ENCODE measurements at regions of chr10 and their contacts with region 1.

Region 1: DNA sequence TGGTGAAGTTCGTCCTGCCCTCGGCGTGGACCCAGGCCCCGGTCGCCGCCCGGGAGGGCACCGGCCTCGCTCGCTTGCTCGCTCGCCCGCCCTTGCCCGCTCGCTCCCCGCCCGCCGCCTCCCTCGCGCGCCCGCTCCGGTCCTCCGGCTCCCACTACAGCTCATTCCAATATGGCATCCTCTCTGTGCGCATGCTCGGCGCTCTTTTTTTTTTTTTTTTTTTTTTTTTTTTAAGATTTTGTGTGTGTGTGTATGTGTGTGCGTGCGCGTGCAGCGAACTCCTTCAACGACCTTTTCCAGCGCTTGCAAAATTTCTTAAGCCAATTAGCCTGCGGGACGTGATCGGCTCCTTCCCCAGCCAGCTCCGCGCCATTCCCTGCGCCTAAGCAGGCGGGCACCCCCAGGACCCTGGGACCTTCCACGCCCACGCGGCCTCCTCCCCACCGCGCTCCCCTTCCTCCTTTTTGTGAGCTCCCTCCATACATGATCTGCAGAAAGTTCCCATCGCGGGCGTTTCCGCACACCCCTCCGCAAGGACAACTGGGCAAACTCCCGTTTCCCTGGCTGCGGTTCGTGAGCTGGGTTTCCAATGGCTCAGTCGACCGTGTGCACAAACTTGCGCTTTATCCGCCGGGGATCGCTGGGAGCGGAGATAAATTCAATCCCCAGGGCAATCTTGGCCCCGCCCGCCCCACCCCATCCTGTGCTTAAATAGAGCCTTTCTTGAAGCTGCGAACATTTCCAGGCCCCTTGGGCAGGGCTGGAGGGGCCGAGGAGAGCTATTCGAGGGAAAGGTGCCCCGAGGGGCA is at the start of gene SFMBT2:
- DNase-seq: peak; percentile 92
- H3K4me3 ChIP-seq: peak within 1 kb of the TSS; percentile 57 to 72
- H3K27ac ChIP-seq: peak within 1 kb of the TSS in 1 of 2 experiments; percentile 70; a peak in 2 of 4 replicates
- H3K4me1 ChIP-seq: peaks cover 0 to 15% of the 10 kb centered on the region in 2 experiments; a peak in 1 of 4 replicates
- H3K27me3 ChIP-seq: peaks cover 38% of the 10 kb centered on the region
- CTCF ChIP-seq: no peak
- EP300 ChIP-seq: no peak
- RAD21 ChIP-seq: no peak
- polyA plus RNA-seq, gene SFMBT2: 0.20 and 0.49 TPM in 2 replicates

Region 2: GRCh38 chr10:6920072-6921019 is 490.7 kb before region 1 on chr10:
- CTCF ChIA-PET with region 1: interaction called, 19 read pairs
- POLR2A ChIA-PET with region 1: interaction called, 3 read pairs
- DNase-seq: peak; percentile 71
- H3K4me3 ChIP-seq: peak overlapping the region in 1 of 2 experiments; percentile 42; a peak in 2 of 4 replicates
- H3K27ac ChIP-seq: no peak overlapping the region
- H3K4me1 ChIP-seq: peaks cover 2 to 3% of the 10 kb centered on the region in 2 experiments; a peak in 1 of 4 replicates
- H3K27me3 ChIP-seq: no peaks in the 10 kb centered on the region
- CTCF ChIP-seq: peak; percentile 69
- EP300 ChIP-seq: no peak
- RAD21 ChIP-seq: peak; percentile 82

Region 3: GRCh38 chr10:7255517-7255916 is 155.5 kb before region 1 on chr10:
- CTCF ChIA-PET with region 1: interaction called, 16 read pairs
- POLR2A ChIA-PET with region 1: no interaction called
- DNase-seq: no peak
- H3K4me3 ChIP-seq: no peak overlapping the region
- H3K27ac ChIP-seq: peak overlapping the region in 1 of 2 experiments; percentile 3; a peak in 2 of 4 replicates
- H3K4me1 ChIP-seq: peaks cover 0 to 31% of the 10 kb centered on the region in 2 experiments; a peak in 2 of 4 replicates
- H3K27me3 ChIP-seq: no peaks in the 10 kb centered on the region
- CTCF ChIP-seq: no peak
- EP300 ChIP-seq: no peak
- RAD21 ChIP-seq: no peak

Region 4: DNA sequence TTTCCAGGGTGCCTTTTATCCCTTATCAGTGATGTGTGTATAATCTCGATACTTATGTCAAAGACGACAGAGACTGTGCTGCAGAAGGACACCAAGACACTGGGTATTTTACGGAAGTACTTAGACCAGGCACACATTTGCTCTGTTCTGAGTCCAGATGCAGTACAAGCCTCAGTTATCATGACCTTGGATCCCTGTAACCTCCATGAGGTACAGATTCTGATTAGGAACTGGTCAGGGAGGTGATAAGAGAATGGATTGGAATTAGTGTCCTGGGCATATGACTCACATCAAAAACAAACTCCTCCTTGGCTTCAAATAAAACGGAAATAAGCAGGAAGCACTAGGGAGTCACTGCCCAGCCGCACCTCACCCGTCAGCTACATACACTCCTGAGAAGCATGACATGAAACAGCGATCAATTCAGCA is 146.7 kb before region 1 on chr10:
- CTCF ChIA-PET with region 1: interaction called, 19 read pairs
- POLR2A ChIA-PET with region 1: interaction called, 3 read pairs
- DNase-seq: peak; percentile 57
- H3K4me3 ChIP-seq: no peak overlapping the region
- H3K27ac ChIP-seq: peak overlapping the region in 1 of 2 experiments; percentile 93; a peak in 3 of 4 replicates
- H3K4me1 ChIP-seq: peaks cover 0 to 38% of the 10 kb centered on the region in 2 experiments; a peak in 2 of 4 replicates
- H3K27me3 ChIP-seq: no peaks in the 10 kb centered on the region
- CTCF ChIP-seq: no peak
- EP300 ChIP-seq: peak in 1 of 2 experiments; percentile 84; a peak in 2 of 4 replicates
- RAD21 ChIP-seq: 0 out of 2 replicates have a peak, but pooled peaks have one; percentile 4

Region 5: DNA sequence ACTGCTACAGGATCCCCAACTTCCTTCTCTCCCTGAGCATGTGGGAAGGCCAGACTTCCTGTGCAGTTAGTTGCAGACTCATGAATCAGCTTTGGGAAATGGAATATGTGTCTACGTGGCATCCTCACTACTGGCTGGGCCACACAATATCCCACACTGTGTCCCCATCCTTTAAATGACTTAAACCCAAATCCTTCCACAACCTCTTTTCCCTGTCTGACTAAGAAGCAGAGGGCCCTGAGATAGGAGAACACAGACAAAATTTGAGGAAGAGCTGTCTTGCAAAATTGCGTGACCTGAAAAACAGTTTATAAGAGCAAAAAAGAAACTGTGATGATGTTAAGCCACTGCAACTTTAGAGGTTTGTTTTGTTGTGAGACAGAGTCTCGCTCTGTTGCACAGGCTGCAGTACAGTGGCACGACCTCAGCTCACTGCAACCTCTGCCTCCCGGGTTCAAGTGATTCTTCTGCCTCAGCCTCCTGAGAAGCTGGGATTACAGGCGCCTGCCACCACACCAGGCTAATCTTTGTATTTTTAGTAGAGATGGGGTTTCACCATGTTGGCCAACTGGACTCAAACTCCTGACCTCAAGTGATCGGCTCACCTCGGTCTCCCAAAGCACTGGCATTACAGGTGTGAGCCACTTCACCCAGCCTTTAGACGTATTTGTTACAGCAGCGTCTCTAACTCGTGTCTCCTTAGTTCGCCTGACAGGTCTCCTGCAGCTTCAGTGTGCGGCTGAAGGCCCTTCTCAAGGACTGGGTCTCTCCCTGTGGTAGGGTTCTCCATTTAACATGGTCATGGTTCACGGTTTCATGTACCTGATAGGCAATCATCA is 46.6 kb after region 1 on chr10:
- CTCF ChIA-PET with region 1: no interaction called
- POLR2A ChIA-PET with region 1: no interaction called
- DNase-seq: no peak
- H3K4me3 ChIP-seq: no peak overlapping the region
- H3K27ac ChIP-seq: no peak overlapping the region
- H3K4me1 ChIP-seq: no peaks in the 10 kb centered on the region; a peak in 1 of 4 replicates
- H3K27me3 ChIP-seq: no peaks in the 10 kb centered on the region
- CTCF ChIP-seq: no peak
- EP300 ChIP-seq: no peak
- RAD21 ChIP-seq: no peak